ENCODE measurements at regions of chr1 and their contacts with region 1.

Region 1: DNA sequence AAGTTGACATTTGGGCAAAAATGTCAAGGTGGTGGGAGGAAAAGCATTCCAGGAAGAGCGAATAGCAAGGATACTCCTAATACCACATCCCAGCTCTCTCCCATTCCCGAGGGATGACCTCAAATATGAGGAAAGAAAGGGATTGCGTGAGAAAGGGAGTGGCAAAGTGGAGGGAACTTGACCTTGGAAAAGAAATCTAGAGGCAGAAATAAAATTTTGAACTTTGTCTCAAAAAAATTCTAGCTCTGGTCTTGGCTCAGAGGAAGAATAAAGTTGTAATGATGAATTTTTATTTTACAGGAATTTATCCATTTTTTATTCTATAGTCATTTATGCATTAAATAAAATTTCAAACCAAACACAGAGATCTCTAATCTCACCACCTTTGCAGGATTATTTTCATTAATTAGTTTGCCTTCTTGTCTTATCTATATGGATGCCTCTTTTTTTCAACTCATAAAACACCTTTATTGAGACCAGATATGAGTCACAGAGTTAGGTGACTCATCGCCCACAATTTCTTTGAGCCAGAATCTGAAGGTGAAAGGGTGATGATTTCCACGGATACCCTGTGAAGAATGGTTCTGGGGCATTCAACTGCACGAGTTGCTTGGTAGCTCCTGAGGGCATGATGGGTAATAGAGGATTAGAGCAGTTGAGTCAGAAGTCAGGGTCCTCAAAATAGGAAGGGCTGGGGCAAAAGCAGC is 128.0 kb downstream of the TBX19 start:
- DNase-seq: peak; percentile 64
- H3K4me3 Mint-ChIP-seq: peak overlapping the region; percentile 24
- H3K27ac Mint-ChIP-seq: peak overlapping the region; percentile 86
- H3K4me1 Mint-ChIP-seq: peaks cover 42% of the 10 kb centered on the region
- H3K27me3 Mint-ChIP-seq: no peaks in the 10 kb centered on the region

Region 2: DNA sequence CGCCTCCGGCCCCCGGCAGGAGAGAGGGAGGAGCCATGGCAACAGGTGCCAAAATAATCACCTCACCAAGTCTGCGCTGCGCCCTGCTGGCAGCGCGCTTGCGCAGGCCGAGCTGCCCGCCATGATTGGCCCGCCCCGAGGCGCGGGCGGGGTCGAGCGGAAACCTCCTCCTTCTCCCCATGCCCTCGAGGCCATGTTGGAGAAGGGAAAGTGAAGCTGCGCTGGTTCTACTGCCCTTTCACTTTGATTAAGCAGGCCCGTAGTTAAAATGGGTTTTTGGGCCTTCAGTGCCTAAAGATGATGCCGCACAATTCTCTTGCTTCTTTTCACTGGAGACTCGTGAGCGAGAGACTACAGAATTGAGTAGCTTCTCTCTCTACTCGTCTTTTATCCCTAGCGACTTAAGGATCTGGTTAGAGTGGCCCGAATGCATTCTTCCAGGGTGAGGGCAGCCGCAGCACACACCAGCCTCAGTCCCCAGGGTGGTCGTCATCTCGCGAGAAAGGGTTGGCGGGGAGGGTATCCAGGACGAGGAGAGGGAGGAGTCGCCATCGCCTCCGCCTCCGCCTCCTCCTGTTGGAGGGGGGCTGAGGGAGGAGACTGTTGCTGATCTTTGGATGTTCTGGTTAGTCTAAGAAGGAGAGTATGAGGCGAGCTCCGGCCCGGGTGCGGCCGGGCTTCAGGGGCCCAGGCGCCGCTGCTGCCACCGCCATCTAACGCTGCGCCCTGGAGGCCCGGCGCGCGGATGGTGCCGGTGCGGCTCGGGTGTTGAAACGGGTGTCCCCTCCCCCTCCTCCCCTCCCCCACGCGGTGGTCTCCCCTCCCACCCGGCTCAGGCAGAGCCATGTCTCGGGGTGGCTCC is 472.4 kb before region 1 on chr1 and contains the start of gene DCAF6:
- intact Hi-C with region 1: loop called (anchors 1 kb)
- DNase-seq: peak; percentile 98
- H3K4me3 Mint-ChIP-seq: peak within 1 kb of the TSS; percentile 91
- H3K27ac Mint-ChIP-seq: peak within 1 kb of the TSS; percentile 98
- H3K4me1 Mint-ChIP-seq: peaks cover 41% of the 10 kb centered on the region
- H3K27me3 Mint-ChIP-seq: no peaks in the 10 kb centered on the region
- total RNA-seq, gene DCAF6: 20.9 and 24.0 TPM in 2 replicates

Region 3: GRCh38 chr1:168360151-168361021 is 48.3 kb before region 1 on chr1:
- intact Hi-C with region 1: loop called (anchors 1 kb)
- DNase-seq: peak; percentile 36
- H3K4me3 Mint-ChIP-seq: peak overlapping the region; percentile 12
- H3K27ac Mint-ChIP-seq: peak overlapping the region; percentile 68
- H3K4me1 Mint-ChIP-seq: peaks cover 43% of the 10 kb centered on the region
- H3K27me3 Mint-ChIP-seq: peaks cover 3% of the 10 kb centered on the region

Region 4: DNA sequence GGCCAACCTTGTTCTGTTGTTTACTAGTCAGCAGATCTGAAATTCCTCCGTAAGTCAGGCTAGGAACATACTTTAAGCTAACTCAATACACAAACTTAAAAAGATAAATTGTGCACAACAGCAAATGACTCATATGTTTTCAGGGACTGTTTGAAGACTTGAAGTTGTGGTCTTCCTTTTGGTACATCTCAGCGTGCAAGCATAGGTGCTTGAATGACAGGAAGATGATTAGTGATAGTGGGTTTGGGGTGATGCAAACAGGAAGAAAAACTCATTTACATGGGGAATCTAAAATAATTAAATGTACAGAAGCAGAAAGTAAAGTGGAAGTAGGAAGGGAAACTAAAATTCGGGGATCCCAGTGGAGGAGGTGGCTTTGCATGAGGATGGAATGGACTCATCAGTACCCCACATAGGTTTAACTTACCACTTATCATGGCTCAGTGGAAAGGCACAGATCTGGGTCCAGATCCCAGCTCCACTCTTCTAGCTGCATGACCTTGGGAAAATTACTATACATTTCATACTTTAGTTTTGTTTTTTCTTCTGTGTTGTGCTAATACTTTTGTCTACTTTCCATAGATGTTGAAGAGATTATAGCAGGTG is 12.8 kb after region 1 on chr1:
- intact Hi-C with region 1: loop called (anchors 1 kb)
- DNase-seq: no peak
- H3K4me3 Mint-ChIP-seq: peak overlapping the region; percentile 5
- H3K27ac Mint-ChIP-seq: peak overlapping the region; percentile 49
- H3K4me1 Mint-ChIP-seq: peaks cover 26% of the 10 kb centered on the region
- H3K27me3 Mint-ChIP-seq: peaks cover 2% of the 10 kb centered on the region

Region 5: GRCh38 chr1:169106095-169106920 is 697.6 kb after region 1 on chr1 and contains the start of gene ATP1B1:
- intact Hi-C with region 1: loop called (anchors 2 kb)
- DNase-seq: peak; percentile 81
- H3K4me3 Mint-ChIP-seq: peak within 1 kb of the TSS; percentile 89
- H3K27ac Mint-ChIP-seq: peak within 1 kb of the TSS; percentile 80
- H3K4me1 Mint-ChIP-seq: peaks cover 51% of the 10 kb centered on the region
- H3K27me3 Mint-ChIP-seq: peaks cover 5% of the 10 kb centered on the region
- total RNA-seq, gene ATP1B1: 12.3 TPM in 2 replicates